ENCODE measurements at regions of chr12 and their contacts with region 1.

Region 1: GRCh38 chr12:110100315-110100970 is 23.7 kb upstream of the IFT81 start:
- DNase-seq: peak; percentile 51 to 80 (median 70)
- ATAC-seq: peak; percentile 56 to 62
- H3K4me3 ChIP-seq: no peak overlapping the region
- H3K27ac ChIP-seq: no peak overlapping the region
- H3K4me1 ChIP-seq: no peaks in the 10 kb centered on the region
- H3K27me3 ChIP-seq: no peaks in the 10 kb centered on the region

Region 2: DNA sequence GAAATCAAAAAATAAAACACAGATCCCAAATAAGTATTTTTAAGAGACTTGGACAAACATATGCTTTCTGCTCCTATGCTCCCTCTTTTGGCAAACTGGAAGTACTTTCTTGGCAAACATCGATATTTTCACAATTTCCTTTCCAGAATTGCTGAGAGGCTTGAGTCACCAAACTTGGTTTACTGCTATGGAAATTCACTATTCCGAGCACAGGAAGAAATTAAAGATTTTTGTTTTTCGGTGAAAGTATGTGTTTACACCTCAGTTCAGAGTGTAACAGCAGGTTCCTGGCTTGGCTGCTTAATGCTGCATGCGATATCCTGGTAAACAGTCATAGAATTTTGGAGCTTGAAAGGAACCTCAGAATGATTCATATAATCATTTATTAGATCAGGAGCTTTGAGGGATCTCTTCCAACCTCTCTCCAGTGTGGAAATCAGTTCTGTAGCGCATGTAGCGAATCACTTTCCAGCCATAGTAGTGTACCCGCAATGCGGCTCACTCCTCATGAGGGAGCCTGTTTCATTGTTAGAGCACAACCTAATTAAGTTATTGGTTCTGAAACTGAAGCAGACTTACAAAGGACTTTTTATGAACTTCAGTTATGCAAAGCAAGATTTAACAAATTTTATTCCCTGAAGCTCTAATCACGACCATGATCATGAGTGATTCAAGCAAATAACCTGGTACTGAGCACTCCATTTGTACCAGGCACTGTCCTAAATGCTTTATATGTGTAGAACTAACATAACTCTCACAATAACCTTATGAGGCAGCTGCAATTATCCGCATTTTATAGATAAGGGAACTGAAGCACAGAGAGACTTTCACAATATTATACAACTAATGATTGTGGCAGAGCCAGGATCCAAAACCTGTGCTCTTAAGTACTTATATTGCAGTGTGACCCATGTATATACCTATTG is 124.2 kb after region 1 on chr12:
- intact Hi-C with region 1: loop called in 1 of 4 experiments (anchors 10 kb)
- DNase-seq: no peak
- ATAC-seq: peak; percentile 78 to 82
- H3K4me3 ChIP-seq: peak overlapping the region; percentile 26
- H3K27ac ChIP-seq: peak overlapping the region; percentile 64
- H3K4me1 ChIP-seq: peaks cover 2% of the 10 kb centered on the region
- H3K27me3 ChIP-seq: no peaks in the 10 kb centered on the region

Region 3: GRCh38 chr12:110245369-110245772 is 144.9 kb after region 1 on chr12:
- intact Hi-C with region 1: loop called in 1 of 4 experiments (anchors 10 kb)
- DNase-seq: peak; percentile 39 to 79 (median 69)
- ATAC-seq: no peak
- H3K4me3 ChIP-seq: no peak overlapping the region
- H3K27ac ChIP-seq: peak overlapping the region; percentile 91
- H3K4me1 ChIP-seq: peaks cover 15% of the 10 kb centered on the region
- H3K27me3 ChIP-seq: no peaks in the 10 kb centered on the region

Region 4: DNA sequence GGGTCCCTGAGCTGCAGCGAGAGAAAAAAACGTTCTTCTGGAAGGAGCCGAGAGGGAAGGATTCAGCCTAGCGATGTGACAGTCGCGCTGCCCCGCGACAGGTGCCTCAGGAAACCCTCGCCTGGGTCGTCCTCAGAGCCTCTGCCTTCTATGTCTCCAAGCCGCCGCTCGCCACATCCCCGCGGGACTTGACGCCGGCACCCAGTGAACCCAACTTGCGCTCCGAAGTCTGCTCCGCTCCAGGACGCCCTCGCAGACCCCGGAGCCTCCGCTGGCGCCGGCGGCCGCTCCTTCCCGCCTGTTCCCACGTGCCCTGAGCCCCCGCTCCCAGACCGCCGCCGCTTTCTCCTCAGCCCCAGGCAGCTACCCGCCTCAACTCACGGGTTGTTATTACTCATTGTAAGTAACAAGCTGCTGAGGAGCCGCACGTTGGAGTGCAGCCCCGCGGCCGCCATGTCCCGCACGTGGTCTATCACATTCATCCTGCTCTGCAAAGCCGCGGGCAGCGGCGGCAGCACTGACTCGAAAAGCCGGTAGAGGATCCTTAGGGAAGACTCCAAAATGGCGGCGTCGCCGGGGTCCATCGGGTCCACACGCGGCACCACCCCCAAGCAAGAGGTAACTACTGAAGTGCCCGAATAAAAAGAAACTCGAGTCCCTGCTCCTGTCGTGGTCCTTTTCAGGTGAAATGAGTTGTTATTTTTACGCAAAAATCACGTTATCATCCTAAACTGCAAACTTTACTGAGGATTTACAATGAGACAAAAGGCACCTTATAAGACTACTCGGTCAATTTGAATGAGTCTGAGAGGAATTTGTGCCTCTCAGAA is 302.9 kb after region 1 on chr12 and contains the start of gene ANAPC7:
- intact Hi-C with region 1: loop called in 1 of 4 experiments (anchors 10 kb)
- DNase-seq: peak; percentile 91 to 96 (median 96)
- ATAC-seq: peak; percentile 96 to 97
- H3K4me3 ChIP-seq: peak within 1 kb of the TSS; percentile 84
- H3K27ac ChIP-seq: peak within 1 kb of the TSS; percentile 53
- H3K4me1 ChIP-seq: no peaks in the 10 kb centered on the region
- H3K27me3 ChIP-seq: no peaks in the 10 kb centered on the region
- total RNA-seq, gene ANAPC7: 30.7 to 34.5 (median 33.1) TPM

Region 5: GRCh38 chr12:110431957-110432587 is 331.6 kb after region 1 on chr12:
- intact Hi-C with region 1: loop called (anchors 2 to 10 kb)
- DNase-seq: peak in 1 of 3 donors; percentile 63
- ATAC-seq: no peak
- H3K4me3 ChIP-seq: peak overlapping the region; percentile 56
- H3K27ac ChIP-seq: no peak overlapping the region
- H3K4me1 ChIP-seq: no peaks in the 10 kb centered on the region
- H3K27me3 ChIP-seq: no peaks in the 10 kb centered on the region

Measured in right cardiac atrium (tissue), 5 donors.